ENCODE measurements at regions of chr3 and their contacts with region 1.

Region 1: DNA sequence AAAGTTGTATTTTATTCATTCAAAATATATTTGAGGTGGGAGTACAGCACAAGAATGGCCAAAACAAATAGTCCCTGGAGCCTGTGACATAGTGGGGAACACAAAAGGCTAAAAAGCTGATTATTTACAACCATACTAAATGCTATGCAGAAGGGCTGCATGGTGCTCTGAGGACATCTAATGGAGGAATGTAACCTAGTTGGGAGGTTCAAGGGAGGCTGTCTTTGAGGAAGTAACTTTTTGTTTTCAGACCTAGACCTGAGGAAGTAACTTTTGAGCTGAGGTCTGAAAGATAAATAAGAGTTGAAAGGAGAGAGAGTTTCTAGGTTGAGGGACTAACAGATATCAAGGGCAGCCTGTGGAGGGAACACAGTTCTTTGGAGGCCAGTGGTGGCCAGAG is 34.8 kb upstream of the RASA2 start:
- DNase-seq: peak; percentile 80
- ATAC-seq: peak; percentile 90
- H3K4me3 ChIP-seq: no peak overlapping the region
- H3K27ac ChIP-seq: no peak overlapping the region
- H3K4me1 ChIP-seq: no peaks in the 10 kb centered on the region; the same call in 1 of the 2 replicates
- H3K27me3 ChIP-seq: no peaks in the 10 kb centered on the region
- CTCF ChIP-seq: peak; percentile 75 to 95 (median 89)
- EP300 ChIP-seq: no peak
- POLR2A ChIP-seq: no peak
- RAD21 ChIP-seq: peak; percentile 100

Region 2: GRCh38 chr3:141231101-141231935 is 220.7 kb before region 1 on chr3 and contains the start of gene PXYLP1:
- CTCF ChIA-PET with region 1: interaction called, 8 read pairs
- POLR2A ChIA-PET with region 1: no interaction called
- RAD21 ChIA-PET with region 1: interaction called, 8 read pairs
- SMC1A ChIA-PET with region 1: interaction called, 3 read pairs
- in situ Hi-C with region 1: no loop called
- intact Hi-C with region 1: loop called (anchors 5 kb)
- DNase-seq: peak; percentile 16
- ATAC-seq: peak; percentile 97
- H3K4me3 ChIP-seq: peak within 1 kb of the TSS; percentile 62
- H3K27ac ChIP-seq: peak within 1 kb of the TSS; percentile 62
- H3K4me1 ChIP-seq: 0 out of 2 replicates have a peak, but pooled peaks cover 3% of the 10 kb centered on the region
- H3K27me3 ChIP-seq: peaks cover 0 to 2% of the 10 kb centered on the region in 2 experiments; a peak in 2 of 4 replicates
- CTCF ChIP-seq: peak; percentile 47 to 76 (median 59); a peak in 5 of 6 replicates
- EP300 ChIP-seq: no peak
- POLR2A ChIP-seq: peak; percentile 93
- RAD21 ChIP-seq: peak; percentile 56
- polyA plus RNA-seq, gene PXYLP1: 0.19 to 0.35 TPM

Region 3: GRCh38 chr3:141331377-141332318 is 120.4 kb before region 1 on chr3:
- CTCF ChIA-PET with region 1: interaction called, 15 read pairs
- POLR2A ChIA-PET with region 1: no interaction called
- RAD21 ChIA-PET with region 1: interaction called, 15 read pairs
- SMC1A ChIA-PET with region 1: interaction called, 22 read pairs
- in situ Hi-C with region 1: no loop called
- intact Hi-C with region 1: no loop called
- DNase-seq: peak; percentile 69
- ATAC-seq: peak; percentile 24
- H3K4me3 ChIP-seq: no peak overlapping the region
- H3K27ac ChIP-seq: peak overlapping the region; percentile 62
- H3K4me1 ChIP-seq: peaks cover 53% of the 10 kb centered on the region
- H3K27me3 ChIP-seq: no peaks in the 10 kb centered on the region
- CTCF ChIP-seq: no peak
- EP300 ChIP-seq: peak in 1 of 2 experiments; percentile 45; a peak in 1 of 4 replicates
- POLR2A ChIP-seq: no peak
- RAD21 ChIP-seq: no peak

Region 4: GRCh38 chr3:141370065-141370533 is 81.9 kb before region 1 on chr3:
- CTCF ChIA-PET with region 1: interaction called, 72 read pairs
- POLR2A ChIA-PET with region 1: no interaction called
- RAD21 ChIA-PET with region 1: interaction called, 83 read pairs
- SMC1A ChIA-PET with region 1: interaction called, 58 read pairs
- in situ Hi-C with region 1: no loop called
- intact Hi-C with region 1: no loop called
- DNase-seq: peak; percentile 96
- ATAC-seq: peak; percentile 87
- H3K4me3 ChIP-seq: no peak overlapping the region
- H3K27ac ChIP-seq: peak overlapping the region; percentile 35
- H3K4me1 ChIP-seq: peaks cover 53% of the 10 kb centered on the region
- H3K27me3 ChIP-seq: no peaks in the 10 kb centered on the region
- CTCF ChIP-seq: peak; percentile 52 to 75 (median 69)
- EP300 ChIP-seq: no peak
- POLR2A ChIP-seq: peak; percentile 53
- RAD21 ChIP-seq: peak; percentile 80

Region 5: GRCh38 chr3:141419921-141420320 is 32.1 kb before region 1 on chr3:
- CTCF ChIA-PET with region 1: interaction called, 11 read pairs
- POLR2A ChIA-PET with region 1: no interaction called
- RAD21 ChIA-PET with region 1: interaction called, 17 read pairs
- SMC1A ChIA-PET with region 1: interaction called, 25 read pairs
- in situ Hi-C with region 1: no loop called
- intact Hi-C with region 1: no loop called
- DNase-seq: no peak
- ATAC-seq: no peak
- H3K4me3 ChIP-seq: no peak overlapping the region
- H3K27ac ChIP-seq: no peak overlapping the region
- H3K4me1 ChIP-seq: no peaks in the 10 kb centered on the region
- H3K27me3 ChIP-seq: no peaks in the 10 kb centered on the region
- CTCF ChIP-seq: no peak
- EP300 ChIP-seq: no peak
- POLR2A ChIP-seq: no peak
- RAD21 ChIP-seq: no peak

Region 6: GRCh38 chr3:141441381-141442364 is 10.4 kb before region 1 on chr3:
- CTCF ChIA-PET with region 1: interaction called, 87 read pairs
- POLR2A ChIA-PET with region 1: interaction called, 5 read pairs
- RAD21 ChIA-PET with region 1: interaction called, 69 read pairs
- SMC1A ChIA-PET with region 1: interaction called, 64 read pairs
- in situ Hi-C with region 1: no loop called
- intact Hi-C with region 1: no loop called
- DNase-seq: peak; percentile 84
- ATAC-seq: peak; percentile 99
- H3K4me3 ChIP-seq: no peak overlapping the region
- H3K27ac ChIP-seq: peak overlapping the region; percentile 73
- H3K4me1 ChIP-seq: peaks cover 31% of the 10 kb centered on the region
- H3K27me3 ChIP-seq: no peaks in the 10 kb centered on the region
- CTCF ChIP-seq: peak; percentile 94 to 96 (median 95)
- EP300 ChIP-seq: no peak
- POLR2A ChIP-seq: no peak
- RAD21 ChIP-seq: peak; percentile 86

Region 7: GRCh38 chr3:142053244-142053643 is 601.2 kb after region 1 on chr3:
- CTCF ChIA-PET with region 1: no interaction called
- POLR2A ChIA-PET with region 1: no interaction called
- RAD21 ChIA-PET with region 1: no interaction called
- SMC1A ChIA-PET with region 1: no interaction called
- in situ Hi-C with region 1: no loop called
- intact Hi-C with region 1: no loop called
- DNase-seq: no peak
- ATAC-seq: no peak
- H3K4me3 ChIP-seq: no peak overlapping the region
- H3K27ac ChIP-seq: no peak overlapping the region
- H3K4me1 ChIP-seq: no peaks in the 10 kb centered on the region
- H3K27me3 ChIP-seq: no peaks in the 10 kb centered on the region
- CTCF ChIP-seq: no peak
- EP300 ChIP-seq: no peak
- POLR2A ChIP-seq: no peak
- RAD21 ChIP-seq: no peak

Measured in GM12878 (cell line).